Head of caudate nucleus (tissue), 42 donors: ENCODE measurements at regions of chr7 and their contacts with region 1.

Region 1: GRCh38 chr7:87234949-87235348 is 15.4 kb upstream of the TMEM243 start:
- DNase-seq: no peak

Region 2: DNA sequence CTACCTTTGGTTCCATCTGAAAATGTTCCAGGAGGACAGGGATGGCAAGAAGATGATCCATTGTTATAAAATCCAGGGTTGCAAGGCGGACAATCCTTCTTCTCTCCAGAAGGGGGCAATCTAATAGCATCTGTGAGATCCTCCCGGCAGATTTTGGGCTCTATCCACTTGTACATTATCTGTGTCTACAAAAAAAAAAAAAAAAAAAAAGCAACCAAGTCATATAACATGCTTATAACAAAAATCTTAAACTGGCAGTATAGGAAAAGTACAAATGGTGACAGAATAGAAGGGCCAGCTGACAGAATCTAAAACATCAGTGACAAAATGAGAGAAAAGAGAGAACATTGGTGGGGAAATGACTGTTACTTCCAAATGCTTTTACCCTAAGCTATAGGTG is 308.2 kb before region 1 on chr7:
- intact Hi-C with region 1: loop called (anchors 5 kb)
- DNase-seq: peak in 30 of 42 donors; percentile 14 to 85 (median 56)